ENCODE measurements at regions of chr4 and their contacts with region 1.

Region 1: GRCh38 chr4:106502106-106502699 is 133.6 kb upstream of the GIMD1 start:
- DNase-seq: peak; percentile 2
- H3K4me3 Mint-ChIP-seq: no peak overlapping the region
- H3K27ac Mint-ChIP-seq: no peak overlapping the region
- H3K4me1 Mint-ChIP-seq: peaks cover 7% of the 10 kb centered on the region
- H3K27me3 Mint-ChIP-seq: peaks cover 5% of the 10 kb centered on the region

Region 2: GRCh38 chr4:106238820-106239420 is 263.3 kb before region 1 on chr4:
- intact Hi-C with region 1: loop called (anchors 2 kb)
- DNase-seq: no peak
- H3K4me3 Mint-ChIP-seq: no peak overlapping the region
- H3K27ac Mint-ChIP-seq: no peak overlapping the region
- H3K4me1 Mint-ChIP-seq: no peaks in the 10 kb centered on the region
- H3K27me3 Mint-ChIP-seq: no peaks in the 10 kb centered on the region

Region 3: DNA sequence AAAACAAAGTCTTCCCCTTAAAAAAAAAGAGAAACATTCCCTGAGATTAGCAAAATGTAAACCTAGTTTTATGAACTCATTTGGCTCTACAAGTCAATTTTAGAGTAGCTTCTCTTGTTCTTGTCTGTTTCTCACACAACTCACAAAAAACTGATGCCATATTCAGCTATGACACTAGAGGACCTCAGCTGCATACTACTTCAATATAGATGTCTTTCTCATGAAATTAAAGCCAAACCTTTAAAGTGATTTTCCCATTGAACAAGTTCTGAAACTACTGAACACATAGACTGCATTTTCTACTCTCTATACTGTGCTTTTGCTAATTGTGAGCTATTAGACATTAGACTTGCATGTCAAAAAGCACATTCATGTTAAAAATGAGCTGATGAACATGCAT is 236.0 kb before region 1 on chr4:
- intact Hi-C with region 1: loop called (anchors 1 kb)
- DNase-seq: no peak
- H3K4me3 Mint-ChIP-seq: no peak overlapping the region
- H3K27ac Mint-ChIP-seq: no peak overlapping the region
- H3K4me1 Mint-ChIP-seq: no peaks in the 10 kb centered on the region
- H3K27me3 Mint-ChIP-seq: no peaks in the 10 kb centered on the region

Region 4: GRCh38 chr4:106329041-106329618 is 173.1 kb before region 1 on chr4:
- intact Hi-C with region 1: loop called (anchors 5 kb)
- DNase-seq: no peak
- H3K4me3 Mint-ChIP-seq: no peak overlapping the region
- H3K27ac Mint-ChIP-seq: no peak overlapping the region
- H3K4me1 Mint-ChIP-seq: no peaks in the 10 kb centered on the region
- H3K27me3 Mint-ChIP-seq: no peaks in the 10 kb centered on the region

Region 5: GRCh38 chr4:106369456-106370060 is 132.6 kb before region 1 on chr4:
- intact Hi-C with region 1: loop called (anchors 1 kb)
- DNase-seq: no peak
- H3K4me3 Mint-ChIP-seq: no peak overlapping the region
- H3K27ac Mint-ChIP-seq: no peak overlapping the region
- H3K4me1 Mint-ChIP-seq: no peaks in the 10 kb centered on the region
- H3K27me3 Mint-ChIP-seq: peaks cover 16% of the 10 kb centered on the region

Region 6: DNA sequence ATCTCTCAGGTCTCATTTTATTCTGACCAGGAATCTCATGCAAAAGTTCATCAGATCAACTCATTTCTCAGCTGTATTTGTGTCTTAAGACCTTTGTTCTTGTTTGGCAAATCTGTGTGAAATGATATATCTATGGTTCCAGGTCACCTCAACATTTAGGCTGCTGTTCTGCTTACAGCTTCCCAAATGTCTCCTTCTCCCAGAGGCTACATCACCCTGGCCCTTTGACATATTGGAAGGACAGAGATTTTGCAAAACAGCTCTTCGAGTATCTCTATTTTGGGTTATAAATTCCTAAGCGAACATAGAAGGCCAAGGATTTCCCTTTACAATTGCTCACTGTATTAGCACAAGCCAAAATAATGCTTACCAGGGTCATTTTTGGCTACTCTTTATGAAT is 76.1 kb before region 1 on chr4:
- intact Hi-C with region 1: no loop called
- DNase-seq: no peak
- H3K4me3 Mint-ChIP-seq: no peak overlapping the region
- H3K27ac Mint-ChIP-seq: no peak overlapping the region
- H3K4me1 Mint-ChIP-seq: no peaks in the 10 kb centered on the region
- H3K27me3 Mint-ChIP-seq: no peaks in the 10 kb centered on the region

Region 7: DNA sequence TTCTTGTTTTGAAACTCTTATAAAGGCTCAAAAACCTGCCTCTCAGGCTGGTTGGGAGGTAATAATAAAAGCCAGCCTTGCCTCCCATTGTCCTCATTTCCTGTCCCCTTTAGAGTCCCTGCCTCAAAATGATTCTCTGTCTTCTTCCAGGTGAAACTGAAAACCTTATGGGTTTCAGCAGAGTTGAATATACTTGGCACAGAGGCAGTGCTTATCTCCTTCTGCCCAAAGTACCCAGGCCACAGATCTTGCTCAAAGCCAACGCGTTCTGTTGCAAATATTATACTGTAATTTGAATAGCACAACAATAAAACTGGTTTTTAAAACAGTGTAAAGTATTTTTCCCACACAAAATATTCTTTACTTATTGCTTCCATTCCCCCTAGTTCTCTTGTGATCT is 49.5 kb after region 1 on chr4:
- intact Hi-C with region 1: no loop called
- DNase-seq: no peak
- H3K4me3 Mint-ChIP-seq: no peak overlapping the region
- H3K27ac Mint-ChIP-seq: no peak overlapping the region
- H3K4me1 Mint-ChIP-seq: no peaks in the 10 kb centered on the region
- H3K27me3 Mint-ChIP-seq: peaks cover 2% of the 10 kb centered on the region

Region 8: GRCh38 chr4:106691749-106692148 is 189.5 kb after region 1 on chr4:
- intact Hi-C with region 1: no loop called
- DNase-seq: no peak
- H3K4me3 Mint-ChIP-seq: no peak overlapping the region
- H3K27ac Mint-ChIP-seq: no peak overlapping the region
- H3K4me1 Mint-ChIP-seq: peaks cover 18% of the 10 kb centered on the region
- H3K27me3 Mint-ChIP-seq: no peaks in the 10 kb centered on the region